B cell (primary cell): ENCODE measurements at regions of chr3 and their contacts with region 1.

Region 1: DNA sequence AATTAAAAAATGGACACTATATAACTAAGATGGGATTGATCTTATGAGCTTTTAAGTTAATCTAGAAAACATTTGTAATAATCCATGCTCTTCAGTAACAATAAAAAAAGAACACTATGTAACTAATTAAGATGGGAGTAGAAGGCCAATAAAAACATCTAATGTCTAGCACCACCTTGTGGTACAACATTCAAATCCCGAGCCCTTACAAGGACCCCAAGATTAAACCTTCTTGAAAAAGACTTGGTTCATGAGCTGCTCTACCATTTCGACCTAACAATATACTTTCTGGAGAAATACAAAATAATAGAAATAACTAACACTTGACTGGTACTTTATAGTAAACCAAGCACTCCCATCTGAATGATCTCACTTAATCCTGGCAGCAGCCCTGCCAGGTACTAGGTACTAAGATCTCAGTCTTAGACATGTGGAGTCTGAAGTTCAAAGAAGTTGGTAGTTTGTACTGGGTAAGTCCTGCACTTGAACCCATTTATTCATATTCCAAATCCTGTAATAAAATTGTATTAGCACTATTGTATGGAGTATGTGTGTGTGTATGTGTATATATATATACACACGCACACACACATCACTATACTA is 21.8 kb downstream of the METTL6 start:
- DNase-seq: peak; percentile 80
- ATAC-seq: peak; percentile 73
- H3K4me3 ChIP-seq: no peak overlapping the region
- H3K4me3 Mint-ChIP-seq: no peak overlapping the region
- H3K27ac ChIP-seq: no peak overlapping the region
- H3K27ac Mint-ChIP-seq: no peak overlapping the region
- H3K4me1 ChIP-seq: peaks cover 25 to 30% of the 10 kb centered on the region in 2 donors
- H3K4me1 Mint-ChIP-seq: peaks cover 19% of the 10 kb centered on the region
- H3K27me3 ChIP-seq: no peaks in the 10 kb centered on the region
- H3K27me3 Mint-ChIP-seq: no peaks in the 10 kb centered on the region
- CTCF ChIP-seq: peak; percentile 84

Region 2: GRCh38 chr3:15120986-15121385 is 284.6 kb before region 1 on chr3:
- CTCF ChIA-PET with region 1: interaction called, 3 read pairs
- POLR2A ChIA-PET with region 1: no interaction called
- intact Hi-C with region 1: loop called (anchors 1 kb)
- DNase-seq: peak; percentile 1
- ATAC-seq: no peak
- H3K4me3 ChIP-seq: no peak overlapping the region
- H3K4me3 Mint-ChIP-seq: no peak overlapping the region
- H3K27ac ChIP-seq: no peak overlapping the region
- H3K27ac Mint-ChIP-seq: no peak overlapping the region
- H3K4me1 ChIP-seq: no peaks in the 10 kb centered on the region
- H3K4me1 Mint-ChIP-seq: peaks cover 2% of the 10 kb centered on the region
- H3K27me3 ChIP-seq: peaks cover 0 to 6% (median 0%) of the 10 kb centered on the region in 4 experiments
- H3K27me3 Mint-ChIP-seq: no peaks in the 10 kb centered on the region
- CTCF ChIP-seq: no peak

Region 3: GRCh38 chr3:15171096-15171495 is 234.5 kb before region 1 on chr3:
- CTCF ChIA-PET with region 1: no interaction called
- POLR2A ChIA-PET with region 1: no interaction called
- intact Hi-C with region 1: no loop called
- DNase-seq: no peak
- ATAC-seq: no peak
- H3K4me3 ChIP-seq: no peak overlapping the region
- H3K4me3 Mint-ChIP-seq: no peak overlapping the region
- H3K27ac ChIP-seq: no peak overlapping the region
- H3K27ac Mint-ChIP-seq: no peak overlapping the region
- H3K4me1 ChIP-seq: no peaks in the 10 kb centered on the region
- H3K4me1 Mint-ChIP-seq: peaks cover 3% of the 10 kb centered on the region
- H3K27me3 ChIP-seq: peaks cover 0 to 9% (median 2%) of the 10 kb centered on the region in 4 experiments
- H3K27me3 Mint-ChIP-seq: peaks cover 27% of the 10 kb centered on the region
- CTCF ChIP-seq: no peak

Region 4: DNA sequence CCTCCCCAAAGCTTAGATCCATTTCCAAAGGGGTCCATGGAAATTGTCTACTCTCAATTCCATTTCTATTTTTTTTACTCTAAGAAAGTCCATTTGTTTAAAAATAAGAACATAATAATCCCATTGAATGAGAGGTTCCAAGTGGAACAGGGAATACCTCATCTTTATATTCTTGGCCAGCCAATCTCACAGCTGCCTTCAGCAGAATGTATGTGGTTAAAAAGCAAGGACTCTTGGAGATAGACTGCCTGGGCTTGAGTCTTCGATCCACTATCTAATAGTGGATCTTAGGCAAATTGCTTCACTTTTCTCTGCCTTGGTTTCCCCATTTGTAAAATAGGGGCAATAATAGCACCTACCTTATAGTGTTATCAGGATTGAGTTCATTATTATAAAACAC is 224.0 kb before region 1 on chr3:
- CTCF ChIA-PET with region 1: no interaction called
- POLR2A ChIA-PET with region 1: no interaction called
- intact Hi-C with region 1: no loop called
- DNase-seq: no peak
- ATAC-seq: no peak
- H3K4me3 ChIP-seq: no peak overlapping the region
- H3K4me3 Mint-ChIP-seq: no peak overlapping the region
- H3K27ac ChIP-seq: no peak overlapping the region
- H3K27ac Mint-ChIP-seq: no peak overlapping the region
- H3K4me1 ChIP-seq: peaks cover 4 to 11% of the 10 kb centered on the region in 2 donors
- H3K4me1 Mint-ChIP-seq: peaks cover 19% of the 10 kb centered on the region
- H3K27me3 ChIP-seq: peaks cover 0 to 4% (median 1%) of the 10 kb centered on the region in 4 experiments
- H3K27me3 Mint-ChIP-seq: peaks cover 10% of the 10 kb centered on the region
- CTCF ChIP-seq: no peak

Region 5: DNA sequence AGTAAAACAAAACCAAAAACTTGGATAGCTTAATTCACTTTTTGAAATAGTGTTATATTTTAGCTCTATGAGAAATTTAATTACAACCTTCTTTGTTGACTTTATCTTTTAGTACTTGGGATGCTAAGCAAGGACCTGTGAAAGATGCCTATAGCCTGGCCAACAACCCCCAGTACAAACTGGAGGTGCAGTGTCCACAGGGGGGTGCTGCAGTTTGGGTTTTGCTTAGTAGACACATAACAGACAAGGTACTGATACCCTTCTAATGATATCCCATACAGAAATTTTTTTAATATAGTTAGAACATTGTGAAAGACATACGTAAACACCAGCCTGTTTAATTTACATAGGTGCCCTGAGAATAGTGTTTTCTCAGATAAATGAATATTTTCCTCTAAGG is 164.2 kb before region 1 on chr3:
- CTCF ChIA-PET with region 1: interaction called, 46 read pairs
- POLR2A ChIA-PET with region 1: no interaction called
- intact Hi-C with region 1: loop called (anchors 1 kb)
- DNase-seq: peak; percentile 60
- ATAC-seq: peak; percentile 61
- H3K4me3 ChIP-seq: no peak overlapping the region
- H3K4me3 Mint-ChIP-seq: no peak overlapping the region
- H3K27ac ChIP-seq: no peak overlapping the region
- H3K27ac Mint-ChIP-seq: no peak overlapping the region
- H3K4me1 ChIP-seq: no peaks in the 10 kb centered on the region
- H3K4me1 Mint-ChIP-seq: no peaks in the 10 kb centered on the region
- H3K27me3 ChIP-seq: no peaks in the 10 kb centered on the region
- H3K27me3 Mint-ChIP-seq: no peaks in the 10 kb centered on the region
- CTCF ChIP-seq: peak; percentile 64

Region 6: GRCh38 chr3:15361494-15362212 is 43.9 kb before region 1 on chr3:
- CTCF ChIA-PET with region 1: interaction called, 11 read pairs
- POLR2A ChIA-PET with region 1: no interaction called
- intact Hi-C with region 1: no loop called
- DNase-seq: peak; percentile 64
- ATAC-seq: peak; percentile 66
- H3K4me3 ChIP-seq: peak overlapping the region; percentile 5 to 54 (median 19)
- H3K4me3 Mint-ChIP-seq: peak overlapping the region; percentile 76
- H3K27ac ChIP-seq: peak overlapping the region; percentile 95 to 96
- H3K27ac Mint-ChIP-seq: peak overlapping the region; percentile 80
- H3K4me1 ChIP-seq: peaks cover 48 to 63% of the 10 kb centered on the region in 2 donors
- H3K4me1 Mint-ChIP-seq: peaks cover 59% of the 10 kb centered on the region
- H3K27me3 ChIP-seq: no peaks in the 10 kb centered on the region
- H3K27me3 Mint-ChIP-seq: no peaks in the 10 kb centered on the region
- CTCF ChIP-seq: no peak

Region 7: GRCh38 chr3:15384510-15385237 is 20.9 kb before region 1 on chr3:
- CTCF ChIA-PET with region 1: interaction called, 31 read pairs
- POLR2A ChIA-PET with region 1: no interaction called
- intact Hi-C with region 1: loop called (anchors 2 kb)
- DNase-seq: peak; percentile 70
- ATAC-seq: peak; percentile 89
- H3K4me3 ChIP-seq: peak overlapping the region in 3 of 5 experiments; percentile 18 to 32 (median 27)
- H3K4me3 Mint-ChIP-seq: peak overlapping the region; percentile 57
- H3K27ac ChIP-seq: peak overlapping the region; percentile 83 to 85
- H3K27ac Mint-ChIP-seq: peak overlapping the region; percentile 77
- H3K4me1 ChIP-seq: peaks cover 73 to 88% of the 10 kb centered on the region in 2 donors
- H3K4me1 Mint-ChIP-seq: peaks cover 75% of the 10 kb centered on the region
- H3K27me3 ChIP-seq: no peaks in the 10 kb centered on the region
- H3K27me3 Mint-ChIP-seq: no peaks in the 10 kb centered on the region
- CTCF ChIP-seq: no peak